ENCODE measurements at regions of chr17 and their contacts with region 1.

Region 1: GRCh38 chr17:13337864-13338371 is 263.8 kb downstream of the HS3ST3A1 start:
- DNase-seq: no peak
- H3K4me3 ChIP-seq: peak overlapping the region in 1 of 4 donors; percentile 27
- H3K27ac ChIP-seq: no peak overlapping the region
- H3K4me1 ChIP-seq: peaks cover 0 to 5% (median 0%) of the 10 kb centered on the region in 4 donors
- H3K27me3 ChIP-seq: peaks cover 21% of the 10 kb centered on the region
- CTCF ChIP-seq: peak; percentile 64 to 71 (median 70)
- EP300 ChIP-seq: no peak
- POLR2A ChIP-seq: no peak

Region 2: DNA sequence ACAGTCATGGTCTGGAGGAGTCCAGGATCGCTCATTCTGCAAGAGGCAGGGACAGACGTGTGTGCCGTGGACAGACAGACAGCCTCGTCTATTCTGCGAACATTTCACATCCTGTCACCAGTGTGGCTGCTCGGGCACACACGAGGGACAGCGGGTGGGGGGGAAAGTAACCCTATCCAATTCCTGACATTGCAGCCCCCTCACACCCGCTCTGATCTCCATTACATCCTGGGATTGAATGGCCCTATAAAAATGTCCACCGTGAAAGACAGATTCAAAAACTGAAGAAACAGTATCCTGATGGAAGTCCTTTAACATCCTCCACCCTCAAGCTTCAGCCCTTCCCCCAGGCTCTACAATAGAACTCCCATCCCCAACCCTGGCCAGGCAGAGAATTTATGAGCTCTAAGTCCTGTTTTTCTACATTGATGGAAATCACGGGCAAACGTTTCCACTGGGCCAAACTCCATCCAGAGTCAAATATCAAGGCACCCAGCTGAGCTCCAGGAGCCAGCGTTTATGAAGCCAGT is 224.4 kb after region 1 on chr17:
- in situ Hi-C with region 1: loop called in 1 of 4 experiments (anchors 25 kb)
- intact Hi-C with region 1: no loop called
- DNase-seq: no peak
- H3K4me3 ChIP-seq: no peak overlapping the region
- H3K27ac ChIP-seq: no peak overlapping the region
- H3K4me1 ChIP-seq: no peaks in the 10 kb centered on the region
- H3K27me3 ChIP-seq: no peaks in the 10 kb centered on the region
- CTCF ChIP-seq: no peak
- EP300 ChIP-seq: no peak
- POLR2A ChIP-seq: no peak

Region 3: DNA sequence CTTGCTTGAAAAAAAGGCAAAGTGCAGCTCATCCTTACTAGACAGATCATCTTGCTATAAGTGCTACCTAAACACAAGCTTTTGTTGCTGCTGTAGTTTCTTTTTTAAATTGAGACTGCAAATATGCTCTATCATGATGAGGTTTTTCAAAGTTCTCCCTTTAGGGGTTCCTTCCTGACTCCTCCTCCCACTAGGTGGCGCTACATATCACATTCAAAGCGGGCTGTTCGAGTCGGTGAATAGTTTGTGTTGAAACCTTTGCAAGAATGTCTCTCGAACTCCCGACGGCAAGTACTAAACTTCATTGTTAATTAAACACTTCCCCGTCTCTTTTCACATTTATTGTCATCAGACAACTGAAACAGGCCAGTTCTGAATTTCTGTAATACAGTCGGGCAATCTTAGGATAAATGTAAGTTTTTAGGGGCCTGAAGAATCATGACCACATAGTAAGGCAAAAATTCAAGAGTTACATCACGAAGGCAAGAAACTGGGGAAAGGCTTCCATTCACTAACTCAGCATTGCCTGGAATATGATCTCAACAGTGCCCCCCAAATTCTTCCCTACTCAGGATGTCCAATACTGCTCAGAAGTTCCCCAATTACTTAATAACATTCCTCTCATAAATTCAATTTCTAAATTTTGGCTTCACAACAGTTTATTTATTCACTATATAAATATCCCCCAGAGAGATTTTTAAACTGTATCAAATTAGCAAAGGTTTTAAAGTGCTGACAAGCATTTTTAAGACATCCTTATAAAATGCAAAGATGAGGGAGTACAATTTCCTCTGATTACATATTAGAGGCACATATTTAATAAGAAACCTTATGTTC is 257.1 kb after region 1 on chr17:
- in situ Hi-C with region 1: loop called in 2 of 4 experiments (anchors 25 kb)
- intact Hi-C with region 1: no loop called
- DNase-seq: peak; percentile 73
- H3K4me3 ChIP-seq: no peak overlapping the region
- H3K27ac ChIP-seq: no peak overlapping the region
- H3K4me1 ChIP-seq: no peaks in the 10 kb centered on the region
- H3K27me3 ChIP-seq: peaks cover 37% of the 10 kb centered on the region
- CTCF ChIP-seq: peak; percentile 81 to 92 (median 84)
- EP300 ChIP-seq: no peak
- POLR2A ChIP-seq: no peak

Region 4: DNA sequence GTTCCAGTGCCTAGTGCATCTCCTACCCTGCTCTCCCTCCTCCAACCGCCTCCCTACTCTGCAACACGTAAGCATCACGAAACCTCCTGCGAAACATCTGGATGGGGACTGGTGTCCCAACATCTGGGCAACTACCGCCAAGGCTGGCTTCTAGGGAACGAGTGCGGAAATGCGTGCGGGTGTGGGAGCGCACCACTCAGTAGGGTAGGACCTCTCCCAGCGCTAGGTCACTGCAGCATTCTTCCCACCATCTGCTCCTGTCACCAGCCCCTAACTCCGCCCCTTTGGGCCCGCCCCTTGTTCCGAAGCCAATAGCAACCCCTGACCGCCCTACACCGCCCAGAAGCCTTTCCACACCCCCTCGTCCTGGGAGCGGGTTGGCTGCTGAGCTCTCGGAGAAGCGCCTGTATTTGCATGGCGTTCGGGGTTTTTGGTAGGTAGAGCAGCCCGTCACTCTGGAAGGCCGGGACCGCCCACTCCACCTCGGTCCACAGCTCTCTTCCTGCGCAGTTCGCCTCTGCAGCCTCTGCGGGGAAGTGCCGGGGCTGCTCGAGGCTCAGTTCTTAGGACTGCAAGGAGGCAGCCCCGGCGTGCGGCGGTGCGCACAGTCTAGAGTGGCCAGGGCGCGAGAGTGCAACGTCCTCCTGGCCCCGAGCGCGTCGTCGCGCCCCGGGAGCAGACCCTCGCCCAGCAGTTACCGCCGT is 962.8 kb after region 1 on chr17 and contains the start of gene HS3ST3B1:
- in situ Hi-C with region 1: loop called in 3 of 4 experiments (anchors 25 kb)
- intact Hi-C with region 1: no loop called
- DNase-seq: peak; percentile 94
- H3K4me3 ChIP-seq: peak within 1 kb of the TSS; percentile 26 to 62 (median 45)
- H3K27ac ChIP-seq: peak within 1 kb of the TSS; percentile 76 to 79 (median 77)
- H3K4me1 ChIP-seq: peaks cover 0 to 66% (median 41%) of the 10 kb centered on the region in 4 donors
- H3K27me3 ChIP-seq: peaks cover 96% of the 10 kb centered on the region
- CTCF ChIP-seq: peak in 3 of 5 experiments; percentile 12 to 55 (median 28)
- EP300 ChIP-seq: no peak
- POLR2A ChIP-seq: peak; percentile 83
- total RNA-seq, gene HS3ST3B1: 0.40 to 2.5 (median 1.2) TPM in 3 of 4 donors, not detected in the other

Region 5: DNA sequence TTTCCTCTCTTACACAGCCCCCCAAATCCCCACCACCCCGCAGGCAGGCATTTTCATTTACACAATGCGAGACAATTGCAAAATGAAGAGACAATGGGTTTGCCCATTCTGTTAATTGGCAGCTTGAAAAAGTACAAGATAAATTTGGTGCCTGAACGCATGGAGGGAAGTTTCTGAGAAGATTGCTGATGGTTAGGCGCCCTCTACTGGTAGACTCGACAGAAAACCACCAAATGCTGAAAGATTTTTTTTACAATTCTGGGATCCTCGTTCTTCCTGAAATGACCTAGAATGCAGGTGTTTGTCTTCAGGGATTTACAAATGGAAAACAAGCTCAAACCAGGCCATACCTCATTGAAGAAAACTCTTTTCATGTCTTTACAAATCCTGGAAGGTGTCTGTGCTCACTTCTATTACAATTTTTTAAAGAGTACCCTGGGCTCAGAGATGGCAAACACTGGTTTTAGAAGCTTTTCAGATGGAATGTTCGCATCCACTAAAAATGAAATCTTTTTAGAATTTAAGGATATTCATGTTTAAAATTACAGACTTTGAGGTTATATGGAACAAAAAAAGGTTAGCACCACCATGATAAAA is 1588.7 kb after region 1 on chr17:
- in situ Hi-C with region 1: loop called in 2 of 4 experiments (anchors 25 kb)
- intact Hi-C with region 1: no loop called
- DNase-seq: peak; percentile 26
- H3K4me3 ChIP-seq: no peak overlapping the region
- H3K27ac ChIP-seq: no peak overlapping the region
- H3K4me1 ChIP-seq: no peaks in the 10 kb centered on the region
- H3K27me3 ChIP-seq: peaks cover 12% of the 10 kb centered on the region
- CTCF ChIP-seq: peak; percentile 61 to 75 (median 74)
- EP300 ChIP-seq: no peak
- POLR2A ChIP-seq: no peak

Measured in transverse colon (tissue), 4 donors.